Head of caudate nucleus (tissue), 42 donors: ENCODE measurements at regions of chr15 and their contacts with region 1.

Region 1: DNA sequence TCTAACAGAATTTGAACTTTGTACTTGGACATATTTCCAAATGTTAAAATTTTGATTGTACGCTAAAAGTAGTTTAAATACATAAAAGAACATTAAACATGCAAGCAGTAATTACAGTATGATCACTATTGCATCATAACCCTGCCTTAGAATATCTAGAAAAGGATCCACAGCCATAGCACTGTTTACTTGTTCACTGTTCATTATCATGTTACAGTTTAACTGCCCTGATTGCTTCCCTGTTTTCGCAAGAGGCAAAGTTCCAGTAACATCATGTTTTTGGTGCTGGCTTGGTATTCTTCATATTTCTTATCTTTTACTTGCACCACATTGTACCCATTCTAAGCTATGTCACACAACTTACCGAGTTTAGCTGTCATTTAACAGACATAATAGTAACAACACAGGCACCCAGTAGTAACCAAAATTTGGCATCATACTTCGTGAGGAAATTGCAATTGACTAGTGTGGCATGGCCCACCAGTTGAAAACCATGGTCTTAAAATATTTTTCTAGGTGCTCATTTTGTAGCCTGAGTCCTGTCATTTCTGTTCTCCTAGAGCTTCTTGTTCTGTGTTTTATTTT is 13.3 kb upstream of the TMEM87A start:
- DNase-seq: no peak

Region 2: GRCh38 chr15:42401544-42402454 is 115.3 kb after region 1 on chr15:
- intact Hi-C with region 1: loop called (anchors 10 kb)
- DNase-seq: no peak